AG04449 (cell line): ENCODE measurements at regions of chr2 and their contacts with region 1.

Region 1: DNA sequence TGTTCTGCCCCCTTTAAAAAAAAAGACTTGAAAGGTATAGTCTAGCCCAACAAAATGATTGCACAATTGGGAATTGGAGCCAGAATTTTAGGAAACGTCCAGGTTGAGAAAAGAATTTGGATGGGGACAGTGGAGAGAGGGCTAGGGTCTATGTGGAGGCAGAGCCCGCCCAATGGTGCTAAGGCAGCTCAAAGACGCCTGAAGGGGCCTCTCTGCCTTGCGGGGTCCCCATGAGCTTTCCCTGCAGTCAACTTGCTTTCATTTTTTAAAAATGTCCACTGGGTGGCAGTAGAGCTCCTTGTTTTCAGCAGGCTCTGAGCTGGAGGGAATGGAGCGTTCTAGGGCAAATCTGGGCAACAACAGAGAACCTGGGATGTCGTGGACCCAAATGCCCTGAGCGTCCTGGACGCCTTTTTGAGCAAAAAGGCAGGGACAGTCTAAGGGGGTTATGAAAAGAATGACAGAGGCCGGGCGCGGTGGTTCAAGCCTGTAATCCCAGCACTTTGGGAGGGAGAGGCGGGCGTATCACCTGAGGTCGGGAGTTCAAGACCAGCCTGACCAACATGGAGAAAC is 40.2 kb upstream of the ITM2C start:
- DNase-seq: peak; percentile 24
- H3K4me3 ChIP-seq: peak overlapping the region; percentile 49
- CTCF ChIP-seq: peak; percentile 58

Region 2: DNA sequence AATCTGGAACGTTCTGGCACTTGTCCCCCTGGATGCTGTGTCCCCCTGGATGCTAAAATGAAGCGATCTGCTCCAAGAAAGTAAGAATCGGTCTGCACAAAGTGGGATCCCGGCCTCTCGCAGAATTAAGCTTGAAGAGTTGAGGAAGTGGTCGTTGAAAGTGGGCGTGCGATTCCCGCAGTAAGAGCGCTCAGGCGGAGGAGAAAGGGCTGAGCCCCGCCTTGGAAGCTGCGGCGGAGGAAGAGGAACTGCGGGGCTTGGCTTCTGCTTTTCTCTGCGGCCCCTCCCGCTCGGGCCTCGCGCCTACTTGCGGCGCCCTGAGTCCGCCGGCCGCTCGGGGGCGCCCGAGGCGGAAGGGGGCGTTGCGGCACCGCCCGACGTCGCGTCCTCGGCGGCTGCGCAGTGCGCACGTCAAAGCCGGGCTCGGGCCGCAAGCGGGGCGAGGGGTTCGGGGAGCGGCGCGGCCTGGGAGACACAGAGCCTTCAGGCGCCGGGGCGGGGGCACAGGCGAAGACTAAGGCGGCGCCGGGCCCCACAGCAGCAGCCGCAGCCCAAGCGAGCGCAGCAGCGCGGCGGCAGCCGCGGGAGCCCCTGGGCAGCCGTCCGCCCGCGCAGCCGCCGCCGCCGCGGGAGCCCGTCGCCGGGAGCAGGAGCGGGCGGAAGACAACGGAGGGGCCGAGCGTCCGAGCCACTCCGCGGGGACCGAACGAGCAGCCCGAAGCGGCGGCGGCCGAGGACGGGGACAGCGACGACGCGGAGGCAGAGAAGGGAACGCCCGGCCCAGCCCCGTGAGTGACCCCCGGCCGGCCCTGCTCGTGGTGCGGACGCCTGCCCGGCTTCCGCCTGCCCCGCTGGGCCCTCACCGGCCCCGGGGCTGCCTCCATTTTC is 111.8 kb before region 1 on chr2 and contains the start of gene CAB39:
- CTCF ChIA-PET with region 1: interaction called, 18 read pairs
- POLR2A ChIA-PET with region 1: no interaction called
- DNase-seq: no peak
- H3K4me3 ChIP-seq: peak within 1 kb of the TSS; percentile 77
- CTCF ChIP-seq: peak; percentile 85

Region 3: GRCh38 chr2:230842473-230842872 is 18.0 kb after region 1 on chr2:
- CTCF ChIA-PET with region 1: interaction called, 79 read pairs
- POLR2A ChIA-PET with region 1: no interaction called
- DNase-seq: no peak
- H3K4me3 ChIP-seq: no peak overlapping the region
- CTCF ChIP-seq: no peak

Region 4: GRCh38 chr2:230847883-230848388 is 23.4 kb after region 1 on chr2:
- CTCF ChIA-PET with region 1: interaction called, 79 read pairs
- POLR2A ChIA-PET with region 1: no interaction called
- DNase-seq: peak; percentile 9
- H3K4me3 ChIP-seq: no peak overlapping the region
- CTCF ChIP-seq: peak; percentile 95

Region 5: GRCh38 chr2:230864598-230865306 is 40.3 kb after region 1 on chr2 and contains the start of gene ITM2C:
- CTCF ChIA-PET with region 1: interaction called, 11 read pairs
- POLR2A ChIA-PET with region 1: no interaction called
- DNase-seq: no peak
- H3K4me3 ChIP-seq: peak within 1 kb of the TSS; percentile 85
- CTCF ChIP-seq: peak; percentile 57

Region 6: GRCh38 chr2:231056453-231057424 is 232.2 kb after region 1 on chr2 and contains the start of gene PSMD1:
- CTCF ChIA-PET with region 1: interaction called, 77 read pairs
- POLR2A ChIA-PET with region 1: no interaction called
- DNase-seq: peak; percentile 55
- H3K4me3 ChIP-seq: peak within 1 kb of the TSS; percentile 89
- CTCF ChIP-seq: peak; percentile 98

Region 7: DNA sequence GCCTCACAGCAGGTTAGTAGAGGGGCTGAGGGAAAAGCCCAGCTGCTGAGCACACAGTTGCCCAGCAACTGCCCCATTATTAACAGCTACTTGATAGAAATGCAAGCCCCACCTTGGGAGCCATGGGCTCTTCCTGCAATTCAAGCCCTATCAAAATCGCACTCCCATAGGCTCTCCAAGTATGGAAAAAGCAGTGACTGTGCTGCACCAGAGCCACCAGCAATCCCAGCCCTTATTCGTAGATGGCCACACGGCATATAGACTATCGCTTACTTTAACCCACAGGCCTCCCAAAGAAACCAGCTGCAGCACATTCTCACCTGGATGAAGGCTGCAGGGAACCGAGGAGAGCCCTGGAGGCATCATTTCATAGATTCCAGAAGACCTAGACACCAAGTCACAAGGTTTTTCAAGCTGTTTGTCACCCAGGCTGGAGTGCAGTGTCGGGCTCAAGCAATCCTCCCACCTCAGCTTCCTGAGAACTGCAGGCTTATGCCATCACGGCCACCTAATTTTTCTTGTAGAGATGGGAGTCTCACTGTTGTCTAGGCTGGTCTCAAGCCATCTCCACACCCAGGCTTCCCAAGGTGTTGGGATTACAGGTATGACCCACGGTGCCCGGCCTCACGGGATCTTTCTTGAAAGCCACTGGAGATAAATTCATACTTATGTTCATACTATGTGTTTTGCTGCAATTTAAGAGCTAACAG is 628.5 kb after region 1 on chr2:
- CTCF ChIA-PET with region 1: interaction called, 17 read pairs
- POLR2A ChIA-PET with region 1: no interaction called
- DNase-seq: no peak
- H3K4me3 ChIP-seq: no peak overlapping the region
- CTCF ChIP-seq: no peak

Region 8: DNA sequence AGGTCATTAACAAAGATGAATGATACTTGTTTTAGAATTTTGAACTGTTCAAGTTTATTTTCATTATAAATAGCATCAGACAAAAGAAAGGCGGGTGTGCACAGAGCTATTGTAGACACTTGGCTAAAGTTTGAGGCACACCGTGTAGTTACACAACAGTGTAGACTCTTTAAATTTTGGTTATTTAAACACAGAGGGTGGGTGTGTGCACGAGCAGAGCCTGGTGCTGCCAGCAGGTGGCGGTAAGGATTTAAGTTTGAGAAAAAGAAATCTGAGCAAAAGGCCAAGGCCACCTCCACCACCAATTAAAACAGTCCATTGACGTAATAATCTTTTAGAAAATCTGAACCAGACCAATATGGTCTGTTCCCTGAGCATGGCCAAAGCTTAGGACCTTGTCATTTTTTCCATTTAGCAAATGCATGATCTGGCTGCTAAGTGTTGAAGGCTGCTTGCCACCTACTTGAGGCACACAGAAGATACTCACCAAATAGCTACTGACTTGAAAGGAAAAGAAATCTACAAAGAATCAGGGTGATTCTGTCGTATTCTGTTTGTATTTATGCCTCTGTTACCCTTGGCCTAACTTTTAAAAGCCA is 976.1 kb after region 1 on chr2:
- CTCF ChIA-PET with region 1: no interaction called
- POLR2A ChIA-PET with region 1: no interaction called
- DNase-seq: no peak
- H3K4me3 ChIP-seq: no peak overlapping the region
- CTCF ChIP-seq: peak; percentile 55